ENCODE measurements at regions of chr12 and their contacts with region 1.

Region 1: DNA sequence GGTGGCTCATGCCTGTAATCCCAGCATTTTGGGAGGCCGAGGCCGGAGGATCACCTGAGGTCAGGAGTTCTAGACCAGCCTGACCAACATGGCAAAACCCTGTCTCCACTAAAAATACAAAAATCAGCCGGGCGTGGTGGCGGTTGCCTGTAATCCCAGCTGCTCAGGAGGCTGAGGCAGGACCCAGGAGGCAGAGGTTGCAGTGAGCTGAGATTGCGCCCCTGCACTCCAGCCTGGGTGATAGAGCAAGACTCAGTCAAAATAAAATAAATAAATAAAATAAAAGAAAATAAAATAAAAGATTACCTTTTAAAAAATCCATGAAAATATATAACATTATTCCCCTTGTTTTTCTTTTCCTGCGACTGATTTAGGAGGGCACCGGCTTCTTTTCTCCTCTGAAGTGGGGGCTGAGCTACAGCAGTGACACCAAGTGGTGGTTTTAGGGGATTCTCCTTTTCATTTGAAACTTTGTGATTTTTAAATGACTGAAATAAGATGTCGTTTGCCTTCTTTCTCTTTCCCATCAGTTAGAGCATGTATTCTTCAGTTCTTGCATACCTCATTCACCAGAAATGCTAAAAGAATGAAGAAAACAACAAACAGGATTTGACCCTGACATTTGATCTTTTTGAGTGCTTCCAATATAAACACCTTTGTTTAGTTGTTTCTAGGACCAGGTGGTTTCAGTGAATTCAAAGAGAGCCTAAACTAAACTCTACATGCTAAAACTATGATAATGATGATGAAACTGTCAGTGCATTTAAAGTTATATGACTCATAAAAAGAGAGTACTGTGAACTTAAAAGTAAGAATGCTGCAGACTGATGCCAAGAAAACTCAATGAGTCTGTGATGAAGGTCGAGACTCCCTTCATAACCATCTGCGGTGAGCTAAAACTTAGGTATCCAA is 22.6 kb upstream of the PKP2 start:
- DNase-seq: peak; percentile 90
- H3K4me3 ChIP-seq: no peak overlapping the region
- H3K27ac ChIP-seq: peak overlapping the region; percentile 96
- H3K4me1 ChIP-seq: peaks cover 47% of the 10 kb centered on the region
- H3K27me3 ChIP-seq: no peaks in the 10 kb centered on the region
- CTCF ChIP-seq: peak; percentile 55 to 60

Region 2: DNA sequence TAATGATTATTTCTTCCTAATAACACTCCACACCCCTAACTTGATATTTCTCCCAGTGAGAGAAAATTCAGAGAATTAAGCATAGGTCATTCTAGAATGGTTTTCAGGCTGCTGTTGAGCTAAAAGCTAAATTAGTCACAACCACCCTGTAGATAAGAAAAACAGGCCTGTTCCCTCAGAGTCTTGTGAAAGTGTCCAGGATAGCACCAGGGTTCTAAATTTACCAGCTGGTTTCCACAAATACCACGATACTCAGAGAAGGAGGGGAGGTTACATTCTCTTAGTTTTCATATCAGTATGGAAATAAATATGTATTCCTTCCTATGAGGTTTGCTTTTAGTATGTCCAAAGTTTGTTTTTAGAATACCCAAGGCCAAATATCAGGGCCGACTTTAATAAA is 97.4 kb before region 1 on chr12:
- CTCF ChIA-PET with region 1: no interaction called
- dilution Hi-C with region 1: no loop called
- in situ Hi-C with region 1: no loop called
- intact Hi-C with region 1: loop called (anchors 5 kb)
- DNase-seq: no peak
- H3K4me3 ChIP-seq: no peak overlapping the region
- H3K27ac ChIP-seq: peak overlapping the region; percentile 71
- H3K4me1 ChIP-seq: peaks cover 10% of the 10 kb centered on the region
- H3K27me3 ChIP-seq: no peaks in the 10 kb centered on the region
- CTCF ChIP-seq: no peak

Region 3: DNA sequence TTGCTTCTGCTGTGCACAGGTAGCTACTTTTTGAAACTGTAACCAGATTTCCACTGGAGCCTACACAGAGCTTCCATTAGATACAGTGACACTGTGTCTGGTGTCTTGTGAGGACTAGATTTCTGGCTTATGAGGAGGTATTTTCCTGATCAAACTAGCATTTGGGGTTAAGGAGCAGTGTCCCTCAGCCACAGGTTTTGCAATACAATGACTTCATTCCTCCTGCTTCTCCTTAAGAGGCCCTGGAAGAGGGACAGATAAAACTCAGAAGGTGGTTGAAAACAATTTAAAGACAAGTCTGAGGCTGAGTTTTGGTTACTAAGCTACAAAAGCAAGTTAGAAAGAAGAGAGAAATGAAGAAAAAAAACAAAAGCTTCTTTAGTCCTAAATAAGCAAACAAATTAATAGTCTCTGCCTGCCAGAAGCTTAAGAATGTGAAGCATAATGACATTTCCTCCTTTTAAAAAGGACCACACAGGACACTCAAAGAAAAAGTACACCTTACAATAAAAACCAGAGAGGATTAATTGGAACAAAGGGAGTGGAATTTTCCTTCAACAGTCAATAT is 75.5 kb before region 1 on chr12:
- CTCF ChIA-PET with region 1: no interaction called
- dilution Hi-C with region 1: no loop called
- in situ Hi-C with region 1: no loop called
- intact Hi-C with region 1: loop called (anchors 5 kb)
- DNase-seq: peak; percentile 42
- H3K4me3 ChIP-seq: no peak overlapping the region
- H3K27ac ChIP-seq: no peak overlapping the region
- H3K4me1 ChIP-seq: no peaks in the 10 kb centered on the region
- H3K27me3 ChIP-seq: no peaks in the 10 kb centered on the region
- CTCF ChIP-seq: no peak

Measured in mammary epithelial cell (primary cell).